ENCODE measurements at regions of chr2 and their contacts with region 1.

Region 1: GRCh38 chr2:41869542-41870264 is 178.1 kb upstream of the PKDCC start:
- DNase-seq: peak; percentile 85
- H3K4me3 ChIP-seq: no peak overlapping the region
- H3K27ac ChIP-seq: no peak overlapping the region
- H3K4me1 ChIP-seq: peaks cover 0 to 33% (median 18%) of the 10 kb centered on the region in 4 donors
- H3K27me3 ChIP-seq: no peaks in the 10 kb centered on the region
- CTCF ChIP-seq: peak; percentile 88 to 94 (median 90)
- EP300 ChIP-seq: no peak
- POLR2A ChIP-seq: no peak

Region 2: GRCh38 chr2:41657226-41657625 is 212.5 kb before region 1 on chr2:
- intact Hi-C with region 1: no loop called
- DNase-seq: no peak
- H3K4me3 ChIP-seq: no peak overlapping the region
- H3K27ac ChIP-seq: no peak overlapping the region
- H3K4me1 ChIP-seq: no peaks in the 10 kb centered on the region
- H3K27me3 ChIP-seq: no peaks in the 10 kb centered on the region
- CTCF ChIP-seq: no peak
- EP300 ChIP-seq: no peak
- POLR2A ChIP-seq: no peak

Region 3: GRCh38 chr2:41709702-41710599 is 159.8 kb before region 1 on chr2:
- intact Hi-C with region 1: no loop called
- DNase-seq: no peak
- H3K4me3 ChIP-seq: no peak overlapping the region
- H3K27ac ChIP-seq: no peak overlapping the region
- H3K4me1 ChIP-seq: no peaks in the 10 kb centered on the region
- H3K27me3 ChIP-seq: no peaks in the 10 kb centered on the region
- CTCF ChIP-seq: no peak
- EP300 ChIP-seq: no peak
- POLR2A ChIP-seq: no peak

Region 4: GRCh38 chr2:41853427-41854216 is 16.1 kb before region 1 on chr2:
- intact Hi-C with region 1: loop called (anchors 2 kb)
- DNase-seq: no peak
- H3K4me3 ChIP-seq: no peak overlapping the region
- H3K27ac ChIP-seq: no peak overlapping the region
- H3K4me1 ChIP-seq: no peaks in the 10 kb centered on the region
- H3K27me3 ChIP-seq: peaks cover 0 to 6% (median 0%) of the 10 kb centered on the region in 3 donors
- CTCF ChIP-seq: peak; percentile 19 to 71 (median 68)
- EP300 ChIP-seq: no peak
- POLR2A ChIP-seq: no peak

Region 5: DNA sequence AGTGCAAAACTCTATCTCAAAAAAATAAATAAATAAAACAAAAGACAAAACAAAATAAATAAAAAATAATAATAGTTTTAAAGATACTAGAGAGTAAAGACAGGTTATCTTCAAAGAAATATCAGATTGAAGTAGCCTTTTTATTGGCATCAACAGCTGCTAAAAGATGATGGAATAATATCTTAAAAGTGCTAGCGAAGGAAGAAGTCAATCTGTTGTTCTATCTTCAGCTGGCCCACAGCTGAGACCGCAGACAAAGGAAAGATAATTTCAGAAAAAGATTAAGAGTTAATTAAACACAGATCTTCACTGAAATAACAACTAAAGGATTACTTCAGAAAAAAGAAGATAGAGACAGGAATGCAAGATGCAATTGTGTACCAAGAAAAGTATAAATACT is 47.9 kb after region 1 on chr2:
- intact Hi-C with region 1: no loop called
- DNase-seq: no peak
- H3K4me3 ChIP-seq: no peak overlapping the region
- H3K27ac ChIP-seq: no peak overlapping the region
- H3K4me1 ChIP-seq: peaks cover 0 to 26% (median 11%) of the 10 kb centered on the region in 4 donors
- H3K27me3 ChIP-seq: no peaks in the 10 kb centered on the region
- CTCF ChIP-seq: no peak
- EP300 ChIP-seq: no peak
- POLR2A ChIP-seq: no peak

Region 6: DNA sequence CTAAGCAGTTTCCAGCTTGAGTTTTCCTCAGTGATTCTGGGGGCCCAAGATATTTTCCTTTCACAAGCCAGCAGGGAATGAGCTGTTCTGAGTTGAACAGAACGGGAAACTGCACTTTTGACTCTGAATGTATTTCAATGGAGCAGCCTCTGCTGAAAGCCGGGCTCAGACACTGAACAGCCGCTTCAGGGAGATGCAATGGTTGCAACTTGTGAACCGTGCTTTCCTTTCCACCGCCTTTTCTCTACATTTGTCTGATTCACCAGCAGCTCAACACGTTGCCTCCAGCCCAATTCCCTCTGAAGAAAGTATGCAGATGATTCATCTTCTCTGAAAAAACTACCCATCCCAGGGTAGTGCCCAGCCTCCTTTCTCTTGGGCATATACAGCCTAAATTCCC is 58.8 kb after region 1 on chr2:
- intact Hi-C with region 1: loop called (anchors 5 kb)
- DNase-seq: no peak
- H3K4me3 ChIP-seq: no peak overlapping the region
- H3K27ac ChIP-seq: peak overlapping the region in 3 of 4 donors; percentile 83 to 90 (median 84)
- H3K4me1 ChIP-seq: peaks cover 0 to 83% (median 81%) of the 10 kb centered on the region in 4 donors
- H3K27me3 ChIP-seq: no peaks in the 10 kb centered on the region
- CTCF ChIP-seq: no peak
- EP300 ChIP-seq: no peak
- POLR2A ChIP-seq: no peak

Region 7: GRCh38 chr2:41966431-41966893 is 96.8 kb after region 1 on chr2:
- intact Hi-C with region 1: loop called (anchors 5 kb)
- DNase-seq: peak; percentile 92
- H3K4me3 ChIP-seq: no peak overlapping the region
- H3K27ac ChIP-seq: peak overlapping the region; percentile 69 to 84 (median 74)
- H3K4me1 ChIP-seq: peaks cover 4 to 57% (median 56%) of the 10 kb centered on the region in 4 donors
- H3K27me3 ChIP-seq: no peaks in the 10 kb centered on the region
- CTCF ChIP-seq: no peak
- EP300 ChIP-seq: peak in 2 of 4 donors; percentile 31 to 57
- POLR2A ChIP-seq: no peak

Region 8: GRCh38 chr2:42021464-42021863 is 151.8 kb after region 1 on chr2:
- intact Hi-C with region 1: no loop called
- DNase-seq: no peak
- H3K4me3 ChIP-seq: no peak overlapping the region
- H3K27ac ChIP-seq: peak overlapping the region in 2 of 4 donors; percentile 44 to 63
- H3K4me1 ChIP-seq: peaks cover 0 to 15% (median 10%) of the 10 kb centered on the region in 4 donors
- H3K27me3 ChIP-seq: no peaks in the 10 kb centered on the region
- CTCF ChIP-seq: no peak
- EP300 ChIP-seq: no peak
- POLR2A ChIP-seq: no peak

Region 9: DNA sequence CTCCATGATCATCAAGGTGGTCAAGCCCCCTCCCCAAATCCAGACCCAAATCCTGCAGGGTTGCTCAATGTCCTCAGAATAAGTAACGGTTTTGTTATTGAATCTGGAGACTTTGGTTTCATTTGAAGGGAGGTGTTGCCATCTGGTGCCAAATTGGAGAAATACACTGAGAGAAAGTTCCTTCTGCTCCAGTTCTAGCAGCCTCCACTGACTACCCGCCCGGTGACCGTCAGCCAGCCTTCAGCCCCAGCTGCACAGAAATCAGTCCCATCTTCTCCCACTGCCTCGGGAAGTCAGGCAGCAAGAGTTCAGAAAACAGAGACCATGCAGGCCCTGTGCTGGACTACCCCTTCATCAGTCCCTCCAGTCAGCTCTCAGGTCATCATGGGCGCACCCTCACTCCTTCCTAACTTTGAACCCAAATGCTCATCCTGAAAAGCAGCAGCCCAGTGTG is 216.8 kb after region 1 on chr2:
- intact Hi-C with region 1: loop called (anchors 1 kb)
- DNase-seq: no peak
- H3K4me3 ChIP-seq: no peak overlapping the region
- H3K27ac ChIP-seq: no peak overlapping the region
- H3K4me1 ChIP-seq: peaks cover 0 to 29% (median 27%) of the 10 kb centered on the region in 4 donors
- H3K27me3 ChIP-seq: no peaks in the 10 kb centered on the region
- CTCF ChIP-seq: peak; percentile 76 to 89 (median 80)
- EP300 ChIP-seq: no peak
- POLR2A ChIP-seq: no peak